Activated CD4-positive, alpha-beta T cell treated with anti-CD3 and anti-CD28 coated beads for 36 hours (primary cell): ENCODE measurements at regions of chr7 and their contacts with region 1.

Region 1: GRCh38 chr7:100148559-100149350 is at the start of gene LAMTOR4:
- DNase-seq: peak; percentile 99
- ATAC-seq: peak; percentile 98
- H3K4me3 Mint-ChIP-seq: peak within 1 kb of the TSS; percentile 94
- H3K27ac Mint-ChIP-seq: peak within 1 kb of the TSS; percentile 97
- H3K4me1 Mint-ChIP-seq: peaks cover 29% of the 10 kb centered on the region
- H3K27me3 Mint-ChIP-seq: no peaks in the 10 kb centered on the region
- total RNA-seq, gene LAMTOR4: 69.6 to 120 TPM

Region 2: DNA sequence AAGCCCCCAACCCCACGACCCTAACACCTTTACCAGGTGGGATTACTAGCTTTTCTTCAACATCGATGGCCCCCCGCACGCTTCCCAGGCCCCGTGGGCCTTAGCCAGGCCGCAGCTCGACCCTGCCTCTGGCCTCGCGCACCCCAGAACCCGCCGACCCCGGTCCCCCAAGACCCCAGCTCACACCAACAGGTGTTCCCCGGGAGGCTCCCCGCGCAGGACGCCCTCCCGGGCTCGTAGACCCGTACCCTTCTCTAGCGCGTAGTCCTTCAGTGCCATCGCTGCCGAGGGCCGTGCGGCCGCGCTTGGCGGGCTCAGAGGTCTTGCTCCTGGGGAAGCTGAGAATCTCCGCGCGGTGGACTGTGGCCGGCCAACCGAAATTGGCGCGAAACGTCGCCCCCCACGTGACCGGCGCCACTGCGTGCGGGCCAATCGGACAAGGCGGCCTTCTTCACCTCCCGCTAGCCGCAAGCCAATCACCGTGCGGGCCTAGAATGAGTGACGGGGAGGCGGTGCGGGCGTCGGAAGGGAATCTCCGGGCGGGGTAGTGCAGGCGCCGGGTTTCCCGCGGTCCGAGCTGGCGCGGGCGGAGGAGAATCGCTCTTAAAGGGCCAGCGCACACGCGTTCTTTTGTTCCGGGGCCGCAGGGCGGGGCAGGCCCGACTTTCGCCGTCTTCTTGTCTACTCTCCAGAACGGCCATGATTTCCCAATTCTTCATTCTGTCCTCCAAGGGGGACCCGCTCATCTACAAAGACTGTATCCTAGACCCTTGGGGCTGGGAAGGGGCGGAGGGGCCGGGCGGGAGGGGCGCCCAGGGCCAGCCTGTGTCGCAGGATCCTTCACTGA is 47.5 kb before region 1 on chr7 and contains the starts of genes AP4M1 and MCM7:
- CTCF ChIA-PET with region 1: no interaction called
- POLR2A ChIA-PET with region 1: interaction called, 5 read pairs
- intact Hi-C with region 1: loop called in 1 of 2 experiments (anchors 1 kb)
- DNase-seq: peak; percentile 99
- ATAC-seq: peak; percentile 91
- H3K4me3 Mint-ChIP-seq: peak within 1 kb of the TSS; percentile 90
- H3K27ac Mint-ChIP-seq: peak within 1 kb of the TSS; percentile 94
- H3K4me1 Mint-ChIP-seq: peaks cover 41% of the 10 kb centered on the region
- H3K27me3 Mint-ChIP-seq: no peaks in the 10 kb centered on the region
- total RNA-seq, gene AP4M1: 8.8 to 10.4 TPM
- total RNA-seq, gene MCM7: 411 to 429 TPM

Region 3: GRCh38 chr7:100126931-100127865 is 21.6 kb before region 1 on chr7 and contains the start of gene MBLAC1:
- CTCF ChIA-PET with region 1: interaction called, 41 read pairs
- POLR2A ChIA-PET with region 1: interaction called, 5 read pairs
- intact Hi-C with region 1: loop called in 1 of 2 experiments (anchors 1 kb)
- DNase-seq: peak; percentile 95
- ATAC-seq: peak; percentile 74
- H3K4me3 Mint-ChIP-seq: peak within 1 kb of the TSS; percentile 93
- H3K27ac Mint-ChIP-seq: peak within 1 kb of the TSS; percentile 99
- H3K4me1 Mint-ChIP-seq: peaks cover 28% of the 10 kb centered on the region
- H3K27me3 Mint-ChIP-seq: no peaks in the 10 kb centered on the region
- total RNA-seq, gene MBLAC1: 1.6 to 2.2 TPM

Region 4: DNA sequence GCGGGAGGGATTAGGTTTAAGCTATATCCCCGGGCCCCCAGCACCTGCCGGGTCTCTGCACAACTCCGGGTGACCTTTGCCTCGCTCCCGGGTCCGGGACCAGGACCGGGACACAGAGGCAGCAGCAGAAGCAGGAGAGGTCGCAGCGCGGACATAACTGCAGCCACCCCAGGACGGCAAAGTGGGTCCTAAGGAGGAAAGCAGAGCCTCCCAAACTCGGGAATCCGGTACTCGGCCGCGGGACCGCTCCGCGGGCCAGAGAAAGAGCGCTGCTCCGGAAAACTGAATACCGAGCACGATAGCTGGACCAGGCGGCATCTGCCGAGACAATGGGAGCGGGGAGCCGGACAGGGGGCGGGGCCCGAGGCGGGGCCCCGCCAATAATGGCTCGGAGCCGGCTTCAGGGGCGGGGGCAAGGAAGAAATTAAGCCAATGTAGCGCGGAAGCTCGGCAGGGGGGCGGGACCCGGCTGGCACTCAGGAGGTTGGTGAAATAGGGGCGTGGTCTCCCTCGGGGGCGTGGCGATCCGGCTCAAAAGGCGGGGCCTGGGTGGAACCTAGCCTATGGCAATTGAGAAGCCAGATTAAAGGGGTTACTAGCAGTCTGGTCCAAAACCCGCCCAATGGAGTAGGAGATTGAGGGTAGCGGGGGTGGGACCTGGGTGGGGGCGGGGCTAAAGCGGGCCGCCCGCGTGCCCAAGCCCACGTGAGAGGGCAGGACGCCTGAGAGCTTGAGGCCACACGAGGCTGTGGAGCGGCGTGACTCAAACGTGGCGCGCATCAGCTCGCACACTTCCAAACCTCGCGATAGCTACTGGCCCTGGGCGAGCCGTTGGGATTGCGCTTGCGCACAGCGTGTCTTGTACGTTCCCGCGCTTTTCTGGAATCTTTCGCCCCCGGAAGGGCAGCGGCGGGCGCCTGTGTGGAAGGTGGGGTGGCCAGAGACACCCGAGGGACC is 28.6 kb after region 1 on chr7 and contains the starts of genes GPC2 and STAG3:
- CTCF ChIA-PET with region 1: interaction called, 3 read pairs
- POLR2A ChIA-PET with region 1: interaction called, 5 read pairs
- intact Hi-C with region 1: loop called (anchors 1 kb)
- DNase-seq: peak; percentile 99
- ATAC-seq: peak; percentile 89
- H3K4me3 Mint-ChIP-seq: peak within 1 kb of the TSS; percentile 76
- H3K27ac Mint-ChIP-seq: peak within 1 kb of the TSS; percentile 65
- H3K4me1 Mint-ChIP-seq: peaks cover 39% of the 10 kb centered on the region
- H3K27me3 Mint-ChIP-seq: peaks cover 3% of the 10 kb centered on the region
- total RNA-seq, gene GPC2: 5.3 to 6.1 TPM
- total RNA-seq, gene STAG3: 24.7 to 28.3 TPM

Region 5: GRCh38 chr7:100271716-100272537 is 123.2 kb after region 1 on chr7:
- CTCF ChIA-PET with region 1: no interaction called
- POLR2A ChIA-PET with region 1: no interaction called
- intact Hi-C with region 1: loop called in 1 of 2 experiments (anchors 1 kb)
- DNase-seq: peak; percentile 99
- ATAC-seq: peak; percentile 93
- H3K4me3 Mint-ChIP-seq: peak overlapping the region; percentile 65
- H3K27ac Mint-ChIP-seq: no peak overlapping the region
- H3K4me1 Mint-ChIP-seq: peaks cover 13% of the 10 kb centered on the region
- H3K27me3 Mint-ChIP-seq: no peaks in the 10 kb centered on the region